ENCODE measurements at regions of chr3 and their contacts with region 1.

Region 1: GRCh38 chr3:27141668-27142067 is 227.5 kb downstream of the NEK10 start:
- DNase-seq: no peak
- ATAC-seq: no peak
- H3K4me3 ChIP-seq: no peak overlapping the region
- H3K27ac ChIP-seq: no peak overlapping the region
- H3K4me1 ChIP-seq: peaks cover 21% of the 10 kb centered on the region
- H3K27me3 ChIP-seq: no peaks in the 10 kb centered on the region
- CTCF ChIP-seq: no peak

Region 2: GRCh38 chr3:27089068-27089467 is 52.6 kb before region 1 on chr3:
- intact Hi-C with region 1: no loop called
- DNase-seq: no peak
- ATAC-seq: no peak
- H3K4me3 ChIP-seq: no peak overlapping the region
- H3K27ac ChIP-seq: no peak overlapping the region
- H3K4me1 ChIP-seq: no peaks in the 10 kb centered on the region
- H3K27me3 ChIP-seq: no peaks in the 10 kb centered on the region
- CTCF ChIP-seq: no peak

Region 3: DNA sequence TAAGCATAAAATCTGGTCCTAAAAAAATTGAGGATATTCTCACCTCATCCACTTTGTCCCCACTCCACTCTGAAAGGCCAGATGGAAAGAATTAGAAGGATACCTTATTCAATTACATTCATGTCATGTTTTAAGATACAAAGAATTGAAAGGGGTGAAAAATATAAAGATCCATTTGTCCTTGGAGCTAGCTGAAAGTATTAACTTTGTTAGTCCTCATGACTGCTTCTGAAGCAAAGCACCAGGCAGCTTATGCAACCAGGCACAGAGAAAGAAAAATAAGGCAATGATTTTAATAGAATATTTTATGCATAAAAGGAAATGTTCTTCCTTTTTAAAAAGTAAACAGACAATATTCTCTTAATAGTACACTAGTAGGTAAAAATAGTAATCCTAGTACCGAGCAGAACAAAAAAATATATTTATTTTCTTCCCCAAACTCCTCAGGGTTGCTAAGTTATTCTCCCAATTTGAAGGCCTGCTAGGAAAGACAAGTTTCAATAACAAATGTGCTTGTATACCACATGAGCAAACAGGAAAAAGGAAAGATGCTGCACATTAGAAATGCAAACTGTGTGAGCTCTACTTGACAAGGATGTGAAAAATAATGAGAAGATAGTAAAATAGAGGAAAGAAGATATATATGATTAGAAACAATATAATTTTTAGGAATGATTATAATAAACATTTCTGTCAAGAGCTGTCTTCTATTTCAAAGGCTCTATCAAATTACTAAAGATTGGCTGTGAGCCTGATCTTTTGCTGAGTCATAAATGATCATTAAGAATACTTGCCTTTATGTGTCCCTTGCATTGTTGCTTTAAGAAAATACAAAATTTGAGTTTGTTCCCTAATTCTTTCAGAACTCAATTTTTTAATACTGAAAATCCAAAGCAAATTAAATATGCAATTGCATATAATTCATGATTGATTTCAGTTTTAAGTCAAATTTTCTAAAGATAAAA is 53.1 kb after region 1 on chr3:
- intact Hi-C with region 1: loop called in 1 of 2 experiments (anchors 10 kb)
- DNase-seq: no peak
- ATAC-seq: no peak
- H3K4me3 ChIP-seq: no peak overlapping the region
- H3K27ac ChIP-seq: no peak overlapping the region
- H3K4me1 ChIP-seq: peaks cover 14% of the 10 kb centered on the region
- H3K27me3 ChIP-seq: no peaks in the 10 kb centered on the region
- CTCF ChIP-seq: no peak

Region 4: DNA sequence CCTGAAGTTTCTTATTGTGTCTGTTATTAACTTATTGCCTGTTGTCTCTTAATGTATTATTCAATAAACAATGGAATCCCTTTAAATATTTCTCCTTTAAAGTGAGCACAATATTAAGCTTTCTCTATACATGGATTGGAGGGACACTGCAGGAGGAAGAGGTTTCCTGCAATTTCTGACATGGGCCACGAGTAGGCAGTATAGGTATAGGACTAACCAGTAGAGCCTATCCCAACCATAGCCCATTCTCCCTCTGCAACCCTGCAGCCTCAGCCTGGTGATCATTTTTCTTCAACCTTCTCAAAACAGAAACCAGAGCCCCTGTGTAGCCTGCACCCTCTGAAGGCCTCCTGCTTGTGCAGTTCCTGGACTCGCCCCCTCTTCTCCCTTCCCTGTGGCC is 102.7 kb after region 1 on chr3:
- intact Hi-C with region 1: no loop called
- DNase-seq: no peak
- ATAC-seq: no peak
- H3K4me3 ChIP-seq: no peak overlapping the region
- H3K27ac ChIP-seq: no peak overlapping the region
- H3K4me1 ChIP-seq: no peaks in the 10 kb centered on the region
- H3K27me3 ChIP-seq: no peaks in the 10 kb centered on the region
- CTCF ChIP-seq: no peak

Region 5: GRCh38 chr3:27596334-27596841 is 454.7 kb after region 1 on chr3:
- intact Hi-C with region 1: no loop called
- DNase-seq: no peak
- ATAC-seq: no peak
- H3K4me3 ChIP-seq: no peak overlapping the region
- H3K27ac ChIP-seq: no peak overlapping the region
- H3K4me1 ChIP-seq: peaks cover 3% of the 10 kb centered on the region
- H3K27me3 ChIP-seq: no peaks in the 10 kb centered on the region
- CTCF ChIP-seq: no peak